CD8-positive, alpha-beta T cell (primary cell): ENCODE measurements at regions of chr1 and their contacts with region 1.

Region 1: GRCh38 chr1:18597160-18598042 is 33.2 kb upstream of the PAX7 start:
- DNase-seq: peak; percentile 18 to 77 (median 56)
- ATAC-seq: no peak
- H3K4me3 ChIP-seq: no peak overlapping the region
- H3K4me3 Mint-ChIP-seq: no peak overlapping the region
- H3K27ac ChIP-seq: no peak overlapping the region
- H3K27ac Mint-ChIP-seq: no peak overlapping the region
- H3K4me1 ChIP-seq: no peaks in the 10 kb centered on the region
- H3K4me1 Mint-ChIP-seq: no peaks in the 10 kb centered on the region
- H3K27me3 ChIP-seq: peaks cover 0 to 5% of the 10 kb centered on the region in 2 experiments
- H3K27me3 Mint-ChIP-seq: peaks cover 20% of the 10 kb centered on the region
- CTCF ChIP-seq: peak; percentile 86

Region 2: GRCh38 chr1:18608534-18608933 is 11.1 kb after region 1 on chr1:
- CTCF ChIA-PET with region 1: interaction called, 24 read pairs
- POLR2A ChIA-PET with region 1: no interaction called
- intact Hi-C with region 1: no loop called
- DNase-seq: no peak
- ATAC-seq: no peak
- H3K4me3 ChIP-seq: no peak overlapping the region
- H3K4me3 Mint-ChIP-seq: no peak overlapping the region
- H3K27ac ChIP-seq: no peak overlapping the region
- H3K27ac Mint-ChIP-seq: no peak overlapping the region
- H3K4me1 ChIP-seq: no peaks in the 10 kb centered on the region
- H3K4me1 Mint-ChIP-seq: no peaks in the 10 kb centered on the region
- H3K27me3 ChIP-seq: no peaks in the 10 kb centered on the region
- H3K27me3 Mint-ChIP-seq: peaks cover 13% of the 10 kb centered on the region
- CTCF ChIP-seq: no peak

Region 3: GRCh38 chr1:18666438-18666861 is 69.0 kb after region 1 on chr1:
- CTCF ChIA-PET with region 1: interaction called, 11 read pairs
- POLR2A ChIA-PET with region 1: no interaction called
- intact Hi-C with region 1: no loop called
- DNase-seq: no peak
- ATAC-seq: no peak
- H3K4me3 ChIP-seq: no peak overlapping the region
- H3K4me3 Mint-ChIP-seq: peak overlapping the region; percentile 37
- H3K27ac ChIP-seq: no peak overlapping the region
- H3K27ac Mint-ChIP-seq: peak overlapping the region; percentile 22
- H3K4me1 ChIP-seq: peaks cover 17% of the 10 kb centered on the region
- H3K4me1 Mint-ChIP-seq: peaks cover 24% of the 10 kb centered on the region
- H3K27me3 ChIP-seq: peaks cover 0 to 4% of the 10 kb centered on the region in 2 experiments
- H3K27me3 Mint-ChIP-seq: no peaks in the 10 kb centered on the region
- CTCF ChIP-seq: no peak

Region 4: GRCh38 chr1:18681423-18681835 is 84.0 kb after region 1 on chr1:
- CTCF ChIA-PET with region 1: interaction called, 68 read pairs
- POLR2A ChIA-PET with region 1: interaction called, 3 read pairs
- intact Hi-C with region 1: loop called in 1 of 2 experiments (anchors 1 kb)
- DNase-seq: peak in 3 of 9 experiments; percentile 16 to 53 (median 17)
- ATAC-seq: no peak
- H3K4me3 ChIP-seq: no peak overlapping the region
- H3K4me3 Mint-ChIP-seq: no peak overlapping the region
- H3K27ac ChIP-seq: no peak overlapping the region
- H3K27ac Mint-ChIP-seq: no peak overlapping the region
- H3K4me1 ChIP-seq: no peaks in the 10 kb centered on the region
- H3K4me1 Mint-ChIP-seq: peaks cover 7% of the 10 kb centered on the region
- H3K27me3 ChIP-seq: peaks cover 0 to 2% of the 10 kb centered on the region in 2 experiments
- H3K27me3 Mint-ChIP-seq: peaks cover 15% of the 10 kb centered on the region
- CTCF ChIP-seq: peak; percentile 62

Region 5: DNA sequence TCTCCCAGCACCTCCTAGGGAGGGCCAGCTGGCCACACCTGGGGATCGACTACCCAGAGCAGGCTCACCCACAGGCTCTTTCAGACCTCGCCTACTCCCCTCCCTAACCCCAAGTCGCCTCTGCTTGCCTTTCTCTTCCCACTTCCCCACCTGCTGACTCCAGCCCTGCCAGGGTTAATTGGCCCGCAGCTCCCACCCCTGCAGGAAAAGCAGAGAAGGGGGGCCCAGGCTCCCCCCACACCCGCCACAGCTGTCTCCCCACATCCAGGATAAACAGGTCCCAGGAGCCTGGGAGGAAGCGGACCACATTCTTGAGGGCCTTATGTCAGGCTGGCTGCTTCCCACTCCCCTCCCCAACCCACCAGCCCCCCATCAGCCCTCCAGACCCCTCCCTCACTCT is 217.0 kb after region 1 on chr1:
- CTCF ChIA-PET with region 1: interaction called, 43 read pairs
- POLR2A ChIA-PET with region 1: no interaction called
- intact Hi-C with region 1: no loop called
- DNase-seq: no peak
- ATAC-seq: no peak
- H3K4me3 ChIP-seq: no peak overlapping the region
- H3K4me3 Mint-ChIP-seq: no peak overlapping the region
- H3K27ac ChIP-seq: no peak overlapping the region
- H3K27ac Mint-ChIP-seq: no peak overlapping the region
- H3K4me1 ChIP-seq: no peaks in the 10 kb centered on the region
- H3K4me1 Mint-ChIP-seq: no peaks in the 10 kb centered on the region
- H3K27me3 ChIP-seq: peaks cover 0 to 4% of the 10 kb centered on the region in 2 experiments
- H3K27me3 Mint-ChIP-seq: peaks cover 38% of the 10 kb centered on the region
- CTCF ChIP-seq: no peak

Region 6: GRCh38 chr1:18875107-18875795 is 277.9 kb after region 1 on chr1:
- CTCF ChIA-PET with region 1: interaction called, 15 read pairs
- POLR2A ChIA-PET with region 1: no interaction called
- intact Hi-C with region 1: loop called in 1 of 2 experiments (anchors 1 kb)
- DNase-seq: peak; percentile 26 to 72 (median 69)
- ATAC-seq: peak; percentile 65
- H3K4me3 ChIP-seq: no peak overlapping the region
- H3K4me3 Mint-ChIP-seq: no peak overlapping the region
- H3K27ac ChIP-seq: no peak overlapping the region
- H3K27ac Mint-ChIP-seq: no peak overlapping the region
- H3K4me1 ChIP-seq: no peaks in the 10 kb centered on the region
- H3K4me1 Mint-ChIP-seq: no peaks in the 10 kb centered on the region
- H3K27me3 ChIP-seq: no peaks in the 10 kb centered on the region
- H3K27me3 Mint-ChIP-seq: no peaks in the 10 kb centered on the region
- CTCF ChIP-seq: peak; percentile 56